ENCODE measurements at regions of chr1 and their contacts with region 1.

Region 1: GRCh38 chr1:45512641-45513054 is 9.0 kb downstream of the PRDX1 start:
- DNase-seq: peak; percentile 77
- H3K4me3 Mint-ChIP-seq: no peak overlapping the region
- H3K27ac Mint-ChIP-seq: no peak overlapping the region
- H3K4me1 Mint-ChIP-seq: peaks cover 14% of the 10 kb centered on the region
- H3K27me3 Mint-ChIP-seq: no peaks in the 10 kb centered on the region

Region 2: DNA sequence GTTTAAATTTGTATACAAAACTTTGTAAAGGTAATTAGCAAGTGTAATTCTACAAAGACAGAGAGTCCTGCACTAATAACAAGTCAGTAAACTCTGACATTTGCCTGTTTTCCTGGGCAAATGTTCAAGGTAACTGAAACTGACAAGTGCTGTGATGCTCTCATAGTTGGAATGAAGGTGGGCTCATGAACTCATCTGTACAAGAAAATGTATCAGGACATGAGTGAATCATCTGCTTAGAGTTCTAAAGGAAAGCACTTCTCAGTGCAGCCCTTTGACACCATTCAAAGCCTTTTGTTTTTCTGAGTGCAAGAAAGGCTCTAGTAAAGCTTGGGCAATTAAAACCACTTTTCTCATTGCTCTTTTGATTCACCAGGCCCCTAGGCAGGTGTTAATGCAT is 409.1 kb before region 1 on chr1:
- CTCF ChIA-PET with region 1: no interaction called
- intact Hi-C with region 1: no loop called
- DNase-seq: no peak
- H3K4me3 Mint-ChIP-seq: no peak overlapping the region
- H3K27ac Mint-ChIP-seq: no peak overlapping the region
- H3K4me1 Mint-ChIP-seq: peaks cover 8% of the 10 kb centered on the region
- H3K27me3 Mint-ChIP-seq: no peaks in the 10 kb centered on the region

Region 3: GRCh38 chr1:45543581-45544417 is 31.2 kb after region 1 on chr1:
- CTCF ChIA-PET with region 1: interaction called, 20 read pairs
- intact Hi-C with region 1: no loop called
- DNase-seq: peak; percentile 90
- H3K4me3 Mint-ChIP-seq: peak overlapping the region; percentile 25
- H3K27ac Mint-ChIP-seq: peak overlapping the region; percentile 74
- H3K4me1 Mint-ChIP-seq: peaks cover 34% of the 10 kb centered on the region
- H3K27me3 Mint-ChIP-seq: no peaks in the 10 kb centered on the region

Region 4: GRCh38 chr1:45569962-45570581 is 57.4 kb after region 1 on chr1:
- CTCF ChIA-PET with region 1: interaction called, 98 read pairs
- intact Hi-C with region 1: loop called (anchors 1 kb)
- DNase-seq: peak; percentile 87
- H3K4me3 Mint-ChIP-seq: no peak overlapping the region
- H3K27ac Mint-ChIP-seq: peak overlapping the region; percentile 34
- H3K4me1 Mint-ChIP-seq: peaks cover 2% of the 10 kb centered on the region
- H3K27me3 Mint-ChIP-seq: no peaks in the 10 kb centered on the region

Region 5: DNA sequence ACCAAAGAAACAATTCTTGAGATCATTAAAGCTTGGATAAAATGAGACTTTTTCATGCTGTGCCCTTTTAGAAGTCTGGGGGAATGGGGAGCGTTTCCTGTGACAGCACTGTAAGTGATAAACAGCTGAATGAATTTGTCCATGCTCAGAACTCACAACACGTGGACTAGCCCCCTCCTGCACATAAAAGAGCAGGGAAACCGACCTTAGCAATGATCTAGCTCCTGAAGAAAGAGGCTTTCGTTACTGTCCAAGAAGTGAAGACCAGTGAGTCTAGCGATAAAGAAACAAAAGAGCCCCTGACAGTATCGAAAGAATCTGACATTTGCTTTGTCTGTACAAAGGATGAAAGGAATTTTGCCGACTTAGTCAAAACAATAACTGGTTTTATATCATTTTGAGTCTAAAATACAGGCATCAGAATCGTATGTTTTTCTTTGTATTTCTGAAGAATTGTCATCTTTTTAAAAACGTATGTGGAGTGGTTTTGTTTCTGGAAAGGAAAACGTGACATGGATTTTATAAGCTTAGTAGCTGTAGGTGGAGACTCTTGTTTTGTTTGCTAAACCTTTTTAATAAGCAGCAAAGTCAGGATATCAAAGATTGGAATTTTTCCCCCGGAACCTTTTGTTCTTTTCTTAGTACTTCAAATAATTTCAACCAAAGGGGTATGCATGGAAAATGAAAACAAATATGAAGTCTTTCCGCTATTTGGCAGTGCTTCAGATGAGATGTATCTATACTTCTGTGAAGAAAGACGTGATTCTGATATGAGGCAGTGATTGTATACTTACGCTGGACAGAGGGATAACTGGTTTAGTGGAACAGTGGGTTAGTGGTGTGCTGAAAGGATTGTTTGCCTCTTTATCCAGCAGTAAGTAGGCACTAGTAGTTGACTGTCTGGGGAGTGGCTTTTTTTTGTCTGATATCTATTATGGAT is 351.8 kb after region 1 on chr1:
- CTCF ChIA-PET with region 1: no interaction called
- intact Hi-C with region 1: loop called (anchors 10 kb)
- DNase-seq: no peak
- H3K4me3 Mint-ChIP-seq: no peak overlapping the region
- H3K27ac Mint-ChIP-seq: no peak overlapping the region
- H3K4me1 Mint-ChIP-seq: peaks cover 43% of the 10 kb centered on the region
- H3K27me3 Mint-ChIP-seq: peaks cover 3% of the 10 kb centered on the region

Region 6: DNA sequence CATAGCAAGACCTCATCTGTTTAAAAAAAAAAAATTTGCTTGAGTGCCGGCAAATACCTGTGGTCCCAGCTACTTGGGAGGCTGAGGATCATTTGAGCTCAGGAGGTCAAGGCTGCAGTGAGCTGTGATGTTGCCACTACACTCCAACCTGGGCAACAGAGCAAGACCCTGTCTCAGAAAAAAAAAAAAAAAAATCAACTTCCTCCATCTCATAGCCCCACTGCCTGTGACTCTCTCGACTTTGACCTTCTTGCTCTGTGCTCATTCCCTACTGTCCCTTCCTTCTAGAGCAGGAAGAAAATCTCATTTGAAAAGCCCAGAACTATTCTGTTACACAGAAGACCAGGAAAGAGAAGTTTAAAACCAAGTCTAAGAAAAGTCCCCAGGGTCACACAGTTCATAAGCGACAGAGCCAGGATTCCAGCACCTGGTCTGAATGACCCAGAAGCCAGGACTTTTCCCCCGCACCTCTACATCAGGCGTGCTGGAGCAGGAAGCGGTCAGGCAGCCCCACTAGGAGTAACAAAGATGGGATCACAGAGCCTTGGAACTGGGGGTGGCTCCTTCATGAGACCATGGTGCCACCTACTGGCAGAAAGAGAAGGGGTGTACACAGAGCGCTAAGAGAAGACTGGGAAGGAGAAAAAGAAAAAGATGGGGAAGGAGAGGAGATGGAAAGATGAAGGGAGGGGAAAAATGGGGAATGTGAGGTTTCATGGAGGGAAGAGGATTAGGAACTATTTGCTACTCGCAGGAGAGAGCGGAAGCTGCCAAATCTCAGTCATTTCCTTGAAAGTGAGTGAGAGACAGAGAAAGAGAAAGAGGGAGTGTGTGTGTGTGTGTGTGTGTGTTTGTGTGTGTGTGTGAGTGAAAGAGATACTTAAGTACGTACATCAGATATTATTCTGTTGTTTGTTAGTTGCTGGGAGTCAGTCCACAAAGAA is 666.8 kb after region 1 on chr1:
- CTCF ChIA-PET with region 1: interaction called, 5 read pairs
- intact Hi-C with region 1: loop called (anchors 5 kb)
- DNase-seq: peak; percentile 82
- H3K4me3 Mint-ChIP-seq: no peak overlapping the region
- H3K27ac Mint-ChIP-seq: no peak overlapping the region
- H3K4me1 Mint-ChIP-seq: peaks cover 8% of the 10 kb centered on the region
- H3K27me3 Mint-ChIP-seq: no peaks in the 10 kb centered on the region